WTC11 (cell line): ENCODE measurements at regions of chr4 and their contacts with region 1.

Region 1: DNA sequence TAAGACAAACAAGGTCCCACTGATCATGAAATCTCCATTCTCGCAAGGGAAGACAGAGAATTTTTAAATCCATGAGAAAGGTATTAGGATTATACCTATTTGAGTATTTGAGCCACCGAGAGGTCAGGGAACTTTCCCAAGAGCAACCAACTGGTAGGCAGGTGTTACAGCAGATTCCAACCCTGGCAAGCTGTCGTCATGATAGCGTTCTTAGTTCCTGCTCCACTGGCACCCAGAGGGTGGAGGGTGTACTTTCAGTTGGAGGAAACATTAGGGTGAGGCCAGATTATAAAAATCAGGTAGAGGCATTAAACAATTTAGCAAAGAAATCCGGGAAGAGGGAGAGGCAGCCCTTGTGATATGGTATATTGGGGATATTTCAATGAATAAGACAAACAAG is 23.3 kb downstream of the COQ2 start:
- DNase-seq: no peak
- ATAC-seq: no peak
- H3K4me3 Mint-ChIP-seq: no peak overlapping the region
- H3K27ac Mint-ChIP-seq: no peak overlapping the region; the same call in 1 of the 2 replicates
- H3K4me1 Mint-ChIP-seq: no peaks in the 10 kb centered on the region
- H3K27me3 Mint-ChIP-seq: no peaks in the 10 kb centered on the region
- CTCF ChIP-seq: no peak

Region 2: DNA sequence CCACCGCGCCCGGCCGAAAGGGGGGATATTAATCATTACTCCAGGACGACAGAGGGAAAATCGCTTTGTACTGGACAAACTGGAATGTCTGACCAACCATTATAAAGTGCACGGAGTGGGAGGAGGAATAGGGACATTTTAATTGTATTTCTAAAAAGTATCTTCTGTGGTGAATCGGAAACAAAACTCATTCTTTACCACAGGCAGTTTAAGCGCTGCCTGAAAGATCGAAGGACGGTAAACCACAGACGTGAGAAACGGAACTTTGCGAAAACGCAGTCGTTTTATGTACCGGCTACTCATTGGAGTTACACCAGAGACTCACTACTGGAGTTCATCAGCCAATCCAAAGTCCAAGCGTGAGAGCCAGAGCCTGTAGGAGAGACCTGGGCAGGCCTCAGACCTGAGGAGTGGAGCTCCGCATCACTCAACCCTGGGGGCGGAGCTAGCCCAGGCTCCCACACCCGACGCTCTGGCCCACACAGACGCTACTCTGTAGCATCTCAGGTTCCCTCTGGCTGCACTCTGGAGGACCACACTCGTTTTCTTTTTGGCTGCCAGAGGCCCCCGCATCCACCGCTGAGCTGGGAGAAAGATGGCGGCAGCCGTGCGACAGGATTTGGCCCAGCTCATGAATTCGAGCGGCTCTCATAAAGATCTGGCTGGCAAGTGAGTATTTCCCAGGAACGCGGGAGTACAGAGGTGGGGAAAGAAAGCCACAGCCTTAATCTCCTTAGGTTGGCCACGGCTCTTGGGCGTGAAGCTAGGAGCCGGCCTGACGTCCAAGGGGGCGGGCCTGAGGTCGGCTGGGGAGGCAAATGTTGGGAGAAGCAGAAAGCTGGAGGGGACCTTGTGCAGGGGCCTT is 226.4 kb before region 1 on chr4 and contains the start of gene COPS4:
- CTCF ChIA-PET with region 1: interaction called, 10 read pairs
- POLR2A ChIA-PET with region 1: interaction called, 3 read pairs
- DNase-seq: peak; percentile 95
- ATAC-seq: peak; percentile 100
- H3K4me3 Mint-ChIP-seq: peak within 1 kb of the TSS; percentile 100
- H3K27ac Mint-ChIP-seq: peak within 1 kb of the TSS; percentile 100
- H3K4me1 Mint-ChIP-seq: peaks cover 10% of the 10 kb centered on the region
- H3K27me3 Mint-ChIP-seq: peaks cover 18% of the 10 kb centered on the region
- CTCF ChIP-seq: no peak
- total RNA-seq, gene COPS4: 26.9 to 30.9 TPM (median 28.7 TPM) in 3 replicates